ENCODE measurements at regions of chr6 and their contacts with region 1.

Region 1: DNA sequence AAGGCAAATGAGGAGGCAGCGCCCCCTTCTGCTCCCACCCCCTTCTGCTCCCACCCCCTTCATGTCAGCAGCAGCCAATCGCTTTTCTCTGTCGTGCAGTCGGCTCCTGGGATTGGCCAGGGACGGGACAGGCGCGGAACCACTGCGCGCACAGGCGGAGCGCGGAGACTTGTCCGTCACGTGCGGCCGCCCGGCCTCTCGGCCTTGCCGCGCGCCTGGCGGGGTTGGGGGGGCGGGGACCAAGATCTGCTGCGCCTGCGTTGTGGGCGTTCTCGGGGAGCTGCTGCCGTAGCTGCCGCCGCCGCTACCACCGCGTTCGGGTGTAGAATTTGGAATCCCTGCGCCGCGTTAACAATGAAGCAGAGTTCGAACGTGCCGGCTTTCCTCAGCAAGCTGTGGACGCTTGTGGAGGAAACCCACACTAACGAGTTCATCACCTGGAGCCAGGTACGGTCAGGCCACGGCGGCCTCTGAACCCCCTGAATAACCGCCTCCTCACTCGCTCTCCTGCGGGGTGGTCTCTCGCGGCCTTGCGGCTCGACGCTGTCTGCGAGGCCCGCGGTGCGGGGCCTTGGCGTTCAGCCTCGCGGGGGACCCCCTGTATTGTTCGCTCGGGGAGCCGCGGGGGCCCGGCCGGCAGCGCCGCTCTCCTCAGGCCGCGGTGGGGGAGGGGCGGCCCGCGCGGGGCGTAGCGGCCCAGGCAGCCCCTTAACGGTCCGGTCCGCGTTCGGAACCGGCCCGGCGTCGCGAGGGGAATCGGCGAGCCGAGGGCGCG is at the start of gene HSF2:
- DNase-seq: peak; percentile 92
- ATAC-seq: peak; percentile 99
- H3K4me3 ChIP-seq: peak within 1 kb of the TSS; percentile 94
- H3K27ac ChIP-seq: peak within 1 kb of the TSS; percentile 23
- H3K4me1 ChIP-seq: peaks cover 16% of the 10 kb centered on the region
- H3K27me3 ChIP-seq: no peaks in the 10 kb centered on the region
- CTCF ChIP-seq: no peak
- total RNA-seq, gene HSF2: 7.3 and 8.4 TPM in 2 replicates

Region 2: DNA sequence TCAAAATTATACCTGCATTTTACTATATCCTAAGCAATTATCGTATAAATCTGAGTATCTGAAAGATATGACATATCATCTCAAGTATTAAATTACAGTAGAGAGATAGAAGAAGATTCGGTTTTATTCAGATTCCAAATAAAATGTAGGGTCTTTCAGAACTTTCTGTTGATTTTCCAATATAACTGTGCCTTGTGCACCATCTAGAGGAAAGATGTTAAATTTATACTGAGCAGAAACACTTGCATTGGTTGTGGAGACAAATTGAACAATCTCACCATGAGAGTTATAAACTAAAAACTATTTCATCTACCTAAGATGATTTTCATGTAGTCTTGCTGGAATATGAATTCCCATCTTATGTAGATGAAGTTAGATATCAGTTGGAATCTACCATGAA is 26.9 kb before region 1 on chr6:
- CTCF ChIA-PET with region 1: no interaction called
- POLR2A ChIA-PET with region 1: no interaction called
- intact Hi-C with region 1: no loop called
- DNase-seq: no peak
- ATAC-seq: no peak
- H3K4me3 ChIP-seq: no peak overlapping the region
- H3K27ac ChIP-seq: no peak overlapping the region
- H3K4me1 ChIP-seq: no peaks in the 10 kb centered on the region
- H3K27me3 ChIP-seq: peaks cover 12% of the 10 kb centered on the region; the same call in 1 of the 2 replicates
- CTCF ChIP-seq: peak; percentile 53

Region 3: GRCh38 chr6:122471107-122472021 is 71.8 kb after region 1 on chr6 and contains the start of gene SERINC1:
- CTCF ChIA-PET with region 1: no interaction called
- POLR2A ChIA-PET with region 1: no interaction called
- intact Hi-C with region 1: loop called (anchors 5 kb)
- DNase-seq: peak; percentile 90
- ATAC-seq: peak; percentile 89
- H3K4me3 ChIP-seq: peak within 1 kb of the TSS; percentile 91
- H3K27ac ChIP-seq: peak within 1 kb of the TSS; percentile 43
- H3K4me1 ChIP-seq: no peaks in the 10 kb centered on the region
- H3K27me3 ChIP-seq: no peaks in the 10 kb centered on the region
- CTCF ChIP-seq: no peak
- total RNA-seq, gene SERINC1: 27.8 and 31.7 TPM in 2 replicates

Measured in PC-3 (cell line).